CD4-positive, alpha-beta T cell (primary cell): ENCODE measurements at regions of chr6 and their contacts with region 1.

Region 1: GRCh38 chr6:3939964-3940363 is 90.8 kb downstream of the FAM50B start:
- DNase-seq: no peak
- ATAC-seq: no peak
- H3K4me3 ChIP-seq: no peak overlapping the region
- H3K4me3 Mint-ChIP-seq: no peak overlapping the region
- H3K27ac ChIP-seq: no peak overlapping the region
- H3K27ac Mint-ChIP-seq: no peak overlapping the region
- H3K4me1 ChIP-seq: no peaks in the 10 kb centered on the region
- H3K4me1 Mint-ChIP-seq: no peaks in the 10 kb centered on the region
- H3K27me3 ChIP-seq: peaks cover 9 to 18% of the 10 kb centered on the region in 2 experiments
- H3K27me3 Mint-ChIP-seq: peaks cover 33% of the 10 kb centered on the region
- CTCF ChIP-seq: no peak

Region 2: GRCh38 chr6:3868544-3868943 is 71.4 kb before region 1 on chr6:
- CTCF ChIA-PET with region 1: no interaction called
- POLR2A ChIA-PET with region 1: no interaction called
- intact Hi-C with region 1: no loop called
- DNase-seq: no peak
- ATAC-seq: no peak
- H3K4me3 ChIP-seq: no peak overlapping the region
- H3K4me3 Mint-ChIP-seq: no peak overlapping the region
- H3K27ac ChIP-seq: no peak overlapping the region
- H3K27ac Mint-ChIP-seq: no peak overlapping the region
- H3K4me1 ChIP-seq: peaks cover 38% of the 10 kb centered on the region
- H3K4me1 Mint-ChIP-seq: peaks cover 33% of the 10 kb centered on the region
- H3K27me3 ChIP-seq: peaks cover 0 to 8% of the 10 kb centered on the region in 2 experiments
- H3K27me3 Mint-ChIP-seq: peaks cover 11% of the 10 kb centered on the region
- CTCF ChIP-seq: no peak

Region 3: DNA sequence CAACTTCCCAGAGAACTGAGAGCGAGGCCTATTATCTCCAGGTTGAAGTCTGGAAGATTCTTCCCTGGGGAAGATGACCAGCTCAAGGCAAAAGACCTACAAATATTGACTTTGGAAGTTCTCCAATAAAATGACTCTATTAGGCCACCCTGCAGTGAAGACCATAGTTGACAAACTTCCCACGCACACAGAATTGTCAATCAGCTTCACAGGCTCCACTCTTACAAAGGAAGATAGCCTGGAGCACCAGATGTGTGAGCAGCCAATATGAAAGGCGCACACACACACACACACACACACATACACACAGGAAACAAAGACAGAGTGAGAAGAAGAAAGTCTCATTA is 23.0 kb after region 1 on chr6:
- CTCF ChIA-PET with region 1: no interaction called
- POLR2A ChIA-PET with region 1: no interaction called
- intact Hi-C with region 1: loop called in 1 of 2 experiments (anchors 1 kb)
- DNase-seq: no peak
- ATAC-seq: no peak
- H3K4me3 ChIP-seq: no peak overlapping the region
- H3K4me3 Mint-ChIP-seq: no peak overlapping the region
- H3K27ac ChIP-seq: no peak overlapping the region
- H3K27ac Mint-ChIP-seq: no peak overlapping the region
- H3K4me1 ChIP-seq: no peaks in the 10 kb centered on the region
- H3K4me1 Mint-ChIP-seq: no peaks in the 10 kb centered on the region
- H3K27me3 ChIP-seq: peaks cover 0 to 5% of the 10 kb centered on the region in 2 experiments
- H3K27me3 Mint-ChIP-seq: peaks cover 6% of the 10 kb centered on the region
- CTCF ChIP-seq: no peak

Region 4: DNA sequence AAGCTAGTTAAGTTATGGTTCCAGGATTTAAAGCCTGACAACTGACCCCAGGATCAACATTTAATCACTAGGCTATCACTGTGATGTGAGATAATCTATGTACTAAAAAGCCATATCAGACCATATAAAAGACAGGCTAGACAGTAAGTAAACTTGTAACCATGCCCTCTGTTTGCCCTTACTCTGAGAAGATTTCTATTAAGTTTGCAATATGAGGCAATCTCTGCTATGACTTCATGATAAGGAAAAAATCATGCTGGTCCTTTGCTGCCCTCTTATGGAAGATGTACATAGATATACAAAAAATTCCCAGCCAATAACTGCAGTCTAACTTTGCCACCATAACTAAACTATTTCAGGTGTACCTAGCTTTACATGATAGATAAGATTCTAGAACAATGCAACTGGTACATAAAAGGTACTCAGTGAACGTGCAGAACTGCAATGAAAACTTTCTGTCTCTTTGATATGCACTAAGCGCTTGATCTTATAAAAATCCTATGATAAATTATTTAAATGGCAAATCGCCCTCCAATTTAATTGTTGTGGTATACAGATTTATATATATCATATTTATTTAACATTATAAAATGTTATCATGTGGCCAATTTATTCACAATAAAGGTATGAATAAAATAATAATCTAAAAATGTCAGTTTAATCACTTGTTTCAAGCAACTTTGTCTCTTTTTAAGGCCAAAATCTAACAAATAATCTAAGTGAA is 68.5 kb after region 1 on chr6:
- CTCF ChIA-PET with region 1: no interaction called
- POLR2A ChIA-PET with region 1: no interaction called
- intact Hi-C with region 1: loop called in 1 of 2 experiments (anchors 10 kb)
- DNase-seq: peak in 5 of 14 experiments; percentile 10 to 80 (median 68)
- ATAC-seq: peak; percentile 85
- H3K4me3 ChIP-seq: no peak overlapping the region
- H3K4me3 Mint-ChIP-seq: no peak overlapping the region
- H3K27ac ChIP-seq: no peak overlapping the region
- H3K27ac Mint-ChIP-seq: peak overlapping the region; percentile 10
- H3K4me1 ChIP-seq: peaks cover 15% of the 10 kb centered on the region
- H3K4me1 Mint-ChIP-seq: peaks cover 71% of the 10 kb centered on the region
- H3K27me3 ChIP-seq: no peaks in the 10 kb centered on the region
- H3K27me3 Mint-ChIP-seq: no peaks in the 10 kb centered on the region
- CTCF ChIP-seq: peak; percentile 70